ENCODE measurements at regions of chr3 and their contacts with region 1.

Region 1: DNA sequence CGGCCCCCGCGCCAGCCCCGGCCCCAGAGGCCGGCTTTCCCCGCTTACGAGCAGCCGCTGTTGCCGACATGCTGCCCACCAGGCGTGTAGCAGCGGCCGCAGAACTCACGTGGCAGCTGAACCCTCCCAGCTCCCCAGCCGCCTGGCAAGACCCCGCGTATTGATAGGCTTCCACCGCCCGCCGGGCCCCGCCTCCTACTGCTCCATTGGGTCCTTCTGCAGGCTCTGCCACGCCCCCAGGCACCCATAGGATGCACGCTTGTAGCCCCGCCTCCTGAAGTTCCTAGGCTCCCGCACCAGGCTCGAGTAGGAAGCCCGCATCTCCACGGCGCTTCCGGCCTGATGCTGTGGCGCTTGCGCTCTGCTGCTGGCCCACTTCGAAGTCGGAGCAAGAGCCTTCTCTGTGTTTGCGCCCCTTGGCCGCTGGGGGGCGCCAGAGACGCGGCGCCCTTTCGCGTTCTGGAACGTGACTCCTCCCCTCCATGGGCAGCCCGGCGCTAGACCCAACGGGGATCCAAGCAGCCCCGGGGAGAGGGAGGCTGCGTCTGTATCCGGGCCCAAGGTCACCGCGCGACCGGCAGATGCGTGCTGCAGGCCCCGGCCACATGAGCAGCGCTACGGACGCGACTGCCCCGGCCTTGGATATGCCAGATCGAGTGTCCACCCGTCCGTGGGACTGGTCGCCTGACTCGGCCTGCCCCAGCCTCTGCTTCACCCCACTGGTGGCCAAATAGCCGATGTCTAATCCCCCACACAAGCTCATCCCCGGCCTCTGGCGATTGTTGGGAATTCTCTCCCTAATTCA is at the starts of genes PARP3 and RRP9:
- DNase-seq: peak; percentile 98 to 100 (median 99)
- ATAC-seq: peak; percentile 93
- H3K4me3 ChIP-seq: peak within 1 kb of the TSS; percentile 78 to 80
- H3K4me3 Mint-ChIP-seq: peak within 1 kb of the TSS; percentile 94
- H3K27ac ChIP-seq: peak within 1 kb of the TSS; percentile 63 to 83
- H3K27ac Mint-ChIP-seq: peak within 1 kb of the TSS; percentile 90
- H3K4me1 ChIP-seq: peaks cover 31% of the 10 kb centered on the region
- H3K4me1 Mint-ChIP-seq: peaks cover 38% of the 10 kb centered on the region
- H3K27me3 ChIP-seq: no peaks in the 10 kb centered on the region
- H3K27me3 Mint-ChIP-seq: no peaks in the 10 kb centered on the region
- CTCF ChIP-seq: peak; percentile 92
- total RNA-seq, gene PARP3: 6.3 to 6.7 TPM
- total RNA-seq, gene RRP9: 8.1 to 8.3 TPM

Region 2: GRCh38 chr3:51670823-51671733 is 270.9 kb before region 1 on chr3 and contains the start of gene TEX264:
- CTCF ChIA-PET with region 1: no interaction called
- POLR2A ChIA-PET with region 1: no interaction called
- intact Hi-C with region 1: loop called in 1 of 2 experiments (anchors 1 kb)
- DNase-seq: peak; percentile 85 to 99 (median 95)
- ATAC-seq: peak; percentile 78
- H3K4me3 ChIP-seq: peak within 1 kb of the TSS; percentile 95 to 99
- H3K4me3 Mint-ChIP-seq: peak within 1 kb of the TSS; percentile 89
- H3K27ac ChIP-seq: peak within 1 kb of the TSS; percentile 67 to 92
- H3K27ac Mint-ChIP-seq: peak within 1 kb of the TSS; percentile 88
- H3K4me1 ChIP-seq: peaks cover 58% of the 10 kb centered on the region
- H3K4me1 Mint-ChIP-seq: peaks cover 63% of the 10 kb centered on the region
- H3K27me3 ChIP-seq: no peaks in the 10 kb centered on the region
- H3K27me3 Mint-ChIP-seq: no peaks in the 10 kb centered on the region
- CTCF ChIP-seq: no peak
- total RNA-seq, gene TEX264: 18.7 to 21.0 TPM

Region 3: GRCh38 chr3:51974963-51975851 is 33.2 kb after region 1 on chr3 and contains the start of gene ABHD14A:
- CTCF ChIA-PET with region 1: interaction called, 28 read pairs
- POLR2A ChIA-PET with region 1: interaction called, 7 read pairs
- intact Hi-C with region 1: loop called (anchors 1 kb)
- DNase-seq: peak; percentile 35 to 89 (median 69)
- ATAC-seq: peak; percentile 66
- H3K4me3 ChIP-seq: peak within 1 kb of the TSS; percentile 86 to 92
- H3K4me3 Mint-ChIP-seq: peak within 1 kb of the TSS; percentile 88
- H3K27ac ChIP-seq: peak within 1 kb of the TSS; percentile 50 to 72
- H3K27ac Mint-ChIP-seq: peak within 1 kb of the TSS; percentile 87
- H3K4me1 ChIP-seq: peaks cover 33% of the 10 kb centered on the region
- H3K4me1 Mint-ChIP-seq: peaks cover 31% of the 10 kb centered on the region
- H3K27me3 ChIP-seq: no peaks in the 10 kb centered on the region
- H3K27me3 Mint-ChIP-seq: no peaks in the 10 kb centered on the region
- CTCF ChIP-seq: no peak
- total RNA-seq, gene ABHD14A: 6.8 to 6.9 TPM

Region 4: GRCh38 chr3:51995346-51996163 is 53.6 kb after region 1 on chr3 and contains the start of gene RPL29:
- CTCF ChIA-PET with region 1: interaction called, 13 read pairs
- POLR2A ChIA-PET with region 1: interaction called, 7 read pairs
- intact Hi-C with region 1: loop called (anchors 1 kb)
- DNase-seq: peak; percentile 85 to 97 (median 91)
- ATAC-seq: peak; percentile 98
- H3K4me3 ChIP-seq: peak within 1 kb of the TSS; percentile 82 to 93
- H3K4me3 Mint-ChIP-seq: peak within 1 kb of the TSS; percentile 100
- H3K27ac ChIP-seq: peak within 1 kb of the TSS; percentile 86 to 92
- H3K27ac Mint-ChIP-seq: peak within 1 kb of the TSS; percentile 100
- H3K4me1 ChIP-seq: peaks cover 14% of the 10 kb centered on the region
- H3K4me1 Mint-ChIP-seq: peaks cover 35% of the 10 kb centered on the region
- H3K27me3 ChIP-seq: no peaks in the 10 kb centered on the region
- H3K27me3 Mint-ChIP-seq: no peaks in the 10 kb centered on the region
- CTCF ChIP-seq: no peak
- total RNA-seq, gene RPL29: 1,694 to 1,736 TPM

Region 5: DNA sequence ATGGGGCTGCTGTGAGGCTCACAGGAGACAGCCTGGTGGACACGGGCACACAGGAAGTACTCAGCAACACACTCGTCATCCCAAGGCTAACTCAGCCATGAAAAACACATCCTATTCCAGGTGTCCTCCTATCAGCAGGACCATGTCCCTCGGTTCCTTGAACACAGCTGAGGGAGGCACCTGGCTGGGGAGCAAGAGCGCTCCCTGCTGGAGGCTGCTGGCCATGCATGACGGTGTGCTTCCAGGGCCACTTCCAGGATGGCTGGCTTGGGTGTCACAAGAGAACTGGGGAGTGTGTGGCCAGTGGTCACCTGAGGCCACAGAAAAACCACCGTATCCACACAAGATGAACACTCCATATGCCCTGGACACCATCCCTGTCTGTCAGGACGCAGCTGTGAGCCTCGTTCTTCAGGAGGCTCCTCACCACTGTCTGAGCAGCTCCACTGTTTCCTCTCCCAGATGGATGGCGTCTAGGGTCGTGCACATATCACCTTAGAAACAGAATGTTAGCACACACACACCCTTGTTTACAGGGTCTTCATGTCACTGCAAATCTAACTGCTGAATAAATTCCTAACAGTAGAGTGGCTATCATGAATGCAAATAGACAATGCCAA is 181.2 kb after region 1 on chr3:
- CTCF ChIA-PET with region 1: interaction called, 5 read pairs
- POLR2A ChIA-PET with region 1: no interaction called
- intact Hi-C with region 1: loop called (anchors 1 kb)
- DNase-seq: peak; percentile 47 to 85 (median 74)
- ATAC-seq: peak; percentile 97
- H3K4me3 ChIP-seq: no peak overlapping the region
- H3K4me3 Mint-ChIP-seq: no peak overlapping the region
- H3K27ac ChIP-seq: no peak overlapping the region
- H3K27ac Mint-ChIP-seq: no peak overlapping the region
- H3K4me1 ChIP-seq: no peaks in the 10 kb centered on the region
- H3K4me1 Mint-ChIP-seq: no peaks in the 10 kb centered on the region
- H3K27me3 ChIP-seq: no peaks in the 10 kb centered on the region
- H3K27me3 Mint-ChIP-seq: no peaks in the 10 kb centered on the region
- CTCF ChIP-seq: peak; percentile 92

Region 6: DNA sequence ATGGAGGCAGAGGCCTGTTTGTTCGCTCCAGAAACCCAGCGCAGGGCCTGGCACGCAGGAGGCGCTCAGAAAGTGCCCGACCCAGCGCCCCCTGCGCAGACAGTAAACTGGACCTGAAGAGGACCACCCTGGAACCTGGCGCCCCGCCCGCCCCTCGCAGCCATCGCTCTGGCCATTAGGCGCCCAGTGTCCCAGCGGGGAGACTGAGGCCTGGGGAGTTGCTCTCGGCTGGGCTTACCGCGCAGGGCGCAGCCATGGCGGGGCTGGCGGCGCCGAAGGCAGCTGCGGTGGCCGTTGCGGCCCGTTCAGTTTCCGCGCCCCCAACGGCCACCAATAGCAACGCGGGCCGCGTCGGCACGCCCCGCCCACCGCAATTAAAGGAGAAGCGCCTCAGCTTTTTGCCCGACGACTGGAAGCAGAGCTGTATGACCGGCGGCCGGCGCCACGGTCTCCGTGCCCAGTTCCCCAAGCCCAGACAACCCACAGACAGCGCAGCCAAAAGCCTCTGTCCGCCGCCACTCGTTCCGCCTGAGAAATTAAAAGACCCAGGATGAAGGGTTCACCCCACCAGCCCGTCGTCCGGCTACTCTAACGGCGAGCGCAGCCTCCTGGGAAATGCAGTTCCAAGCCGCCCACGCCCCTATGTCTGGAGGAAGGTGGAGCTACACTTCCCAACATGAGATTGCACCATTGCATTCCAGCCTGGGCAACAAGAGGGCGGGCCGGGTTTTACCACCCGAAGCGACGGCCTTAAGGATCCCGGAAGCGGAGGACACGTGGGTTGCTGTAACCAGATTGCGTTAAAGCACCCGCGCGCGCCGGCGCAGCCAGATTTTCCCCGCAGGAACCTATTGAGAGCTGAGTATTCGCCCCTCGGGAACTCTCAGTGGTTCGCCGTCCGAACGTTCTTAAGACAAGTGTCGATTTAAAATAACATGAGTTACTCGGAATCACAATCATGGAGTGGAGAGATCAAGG is 212.4 kb after region 1 on chr3 and contains the start of gene POC1A:
- CTCF ChIA-PET with region 1: no interaction called
- POLR2A ChIA-PET with region 1: no interaction called
- intact Hi-C with region 1: loop called in 1 of 2 experiments (anchors 1 kb)
- DNase-seq: peak; percentile 61 to 91 (median 83)
- ATAC-seq: peak; percentile 85
- H3K4me3 ChIP-seq: peak within 1 kb of the TSS; percentile 98 to 99
- H3K4me3 Mint-ChIP-seq: peak within 1 kb of the TSS; percentile 96
- H3K27ac ChIP-seq: peak within 1 kb of the TSS; percentile 71 to 91
- H3K27ac Mint-ChIP-seq: peak within 1 kb of the TSS; percentile 96
- H3K4me1 ChIP-seq: peaks cover 7% of the 10 kb centered on the region
- H3K4me1 Mint-ChIP-seq: peaks cover 10% of the 10 kb centered on the region
- H3K27me3 ChIP-seq: no peaks in the 10 kb centered on the region
- H3K27me3 Mint-ChIP-seq: no peaks in the 10 kb centered on the region
- CTCF ChIP-seq: no peak
- total RNA-seq, gene POC1A: 0.24 to 0.42 TPM

Measured in CD8-positive, alpha-beta T cell (primary cell).